Mammary epithelial cell (primary cell): ENCODE measurements at regions of chr3 and their contacts with region 1.

Region 1: GRCh38 chr3:130465521-130465920 is 51.5 kb upstream of the COL6A6 start:
- DNase-seq: no peak
- H3K4me3 ChIP-seq: no peak overlapping the region
- H3K27ac ChIP-seq: no peak overlapping the region
- H3K4me1 ChIP-seq: peaks cover 4% of the 10 kb centered on the region
- H3K27me3 ChIP-seq: no peaks in the 10 kb centered on the region
- CTCF ChIP-seq: no peak

Region 2: GRCh38 chr3:130442284-130442683 is 23.2 kb before region 1 on chr3:
- CTCF ChIA-PET with region 1: no interaction called
- dilution Hi-C with region 1: no loop called
- in situ Hi-C with region 1: no loop called
- intact Hi-C with region 1: no loop called
- DNase-seq: no peak
- H3K4me3 ChIP-seq: no peak overlapping the region
- H3K27ac ChIP-seq: no peak overlapping the region
- H3K4me1 ChIP-seq: no peaks in the 10 kb centered on the region
- H3K27me3 ChIP-seq: no peaks in the 10 kb centered on the region
- CTCF ChIP-seq: no peak

Region 3: GRCh38 chr3:130509008-130509407 is 43.5 kb after region 1 on chr3:
- CTCF ChIA-PET with region 1: no interaction called
- dilution Hi-C with region 1: loop called (anchors 5 kb)
- in situ Hi-C with region 1: no loop called
- intact Hi-C with region 1: no loop called
- DNase-seq: no peak
- H3K4me3 ChIP-seq: no peak overlapping the region
- H3K27ac ChIP-seq: no peak overlapping the region
- H3K4me1 ChIP-seq: no peaks in the 10 kb centered on the region
- H3K27me3 ChIP-seq: no peaks in the 10 kb centered on the region
- CTCF ChIP-seq: no peak

Region 4: DNA sequence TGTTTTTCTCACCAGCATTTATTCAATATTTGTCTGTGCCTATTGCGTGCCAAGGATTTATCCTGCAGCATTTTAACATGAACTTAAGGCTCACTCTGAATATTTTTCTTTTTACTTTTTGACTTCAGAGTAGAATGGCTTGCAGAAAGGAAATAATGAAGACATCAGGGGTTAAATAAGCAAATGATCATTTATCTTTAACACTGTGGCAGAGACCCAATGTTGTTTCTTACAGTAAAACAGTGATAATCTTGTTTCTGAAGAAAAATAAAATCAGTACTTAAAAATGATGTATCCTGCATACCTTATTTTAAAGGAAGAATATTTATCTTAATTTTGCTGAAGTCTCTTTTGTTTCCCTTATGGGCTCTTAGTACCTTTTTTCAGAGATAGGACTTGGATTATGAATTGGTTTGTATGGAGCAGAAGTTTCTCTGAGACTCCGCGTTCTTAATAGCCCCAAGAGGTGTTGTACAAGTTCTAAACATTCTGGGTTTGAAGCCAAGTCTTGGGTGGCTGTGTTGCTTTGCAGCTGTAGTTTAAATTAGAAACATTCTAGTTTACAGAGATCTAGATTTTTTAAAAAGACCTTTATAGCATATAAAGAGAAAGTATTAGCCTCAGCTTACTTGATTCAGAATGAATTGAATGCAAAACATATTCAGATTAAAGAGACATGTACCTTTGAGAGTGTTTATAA is 92.0 kb after region 1 on chr3:
- CTCF ChIA-PET with region 1: no interaction called
- dilution Hi-C with region 1: loop called (anchors 5 kb)
- in situ Hi-C with region 1: no loop called
- intact Hi-C with region 1: no loop called
- DNase-seq: no peak
- H3K4me3 ChIP-seq: no peak overlapping the region
- H3K27ac ChIP-seq: no peak overlapping the region
- H3K4me1 ChIP-seq: no peaks in the 10 kb centered on the region
- H3K27me3 ChIP-seq: no peaks in the 10 kb centered on the region
- CTCF ChIP-seq: no peak